Posterior vena cava (tissue), 2 donors: ENCODE measurements at regions of chr9 and their contacts with region 1.

Region 1: DNA sequence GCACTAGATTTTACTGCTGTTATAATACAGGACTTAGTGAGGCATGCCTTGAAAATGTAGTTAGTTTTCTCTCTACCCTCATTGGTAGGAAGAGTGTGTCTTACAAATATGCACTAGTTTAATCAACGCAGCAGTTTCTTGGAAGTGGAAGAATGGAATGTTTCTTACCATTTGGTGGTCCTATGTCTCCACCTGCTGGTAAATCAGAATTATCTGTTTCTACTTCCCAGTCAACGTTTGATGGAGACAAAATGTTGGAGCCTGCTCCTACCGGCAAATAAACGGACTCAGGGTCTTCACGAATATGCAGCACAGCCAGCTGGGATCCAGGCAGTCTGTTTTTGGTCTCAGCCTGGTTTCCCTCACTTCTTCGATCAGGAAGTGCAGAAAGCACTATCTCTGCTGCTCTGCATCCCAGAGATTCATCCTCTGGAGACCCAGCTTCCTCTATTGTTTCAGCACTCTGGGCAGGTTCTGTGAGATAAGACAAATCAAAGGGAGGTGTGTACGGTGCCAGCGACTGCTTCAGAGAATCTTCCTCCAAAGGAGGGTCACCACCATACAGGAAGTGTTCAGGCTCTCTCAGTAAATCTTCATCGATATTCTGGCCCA is 59.5 kb upstream of the PCA3 start:
- DNase-seq: no peak

Region 2: DNA sequence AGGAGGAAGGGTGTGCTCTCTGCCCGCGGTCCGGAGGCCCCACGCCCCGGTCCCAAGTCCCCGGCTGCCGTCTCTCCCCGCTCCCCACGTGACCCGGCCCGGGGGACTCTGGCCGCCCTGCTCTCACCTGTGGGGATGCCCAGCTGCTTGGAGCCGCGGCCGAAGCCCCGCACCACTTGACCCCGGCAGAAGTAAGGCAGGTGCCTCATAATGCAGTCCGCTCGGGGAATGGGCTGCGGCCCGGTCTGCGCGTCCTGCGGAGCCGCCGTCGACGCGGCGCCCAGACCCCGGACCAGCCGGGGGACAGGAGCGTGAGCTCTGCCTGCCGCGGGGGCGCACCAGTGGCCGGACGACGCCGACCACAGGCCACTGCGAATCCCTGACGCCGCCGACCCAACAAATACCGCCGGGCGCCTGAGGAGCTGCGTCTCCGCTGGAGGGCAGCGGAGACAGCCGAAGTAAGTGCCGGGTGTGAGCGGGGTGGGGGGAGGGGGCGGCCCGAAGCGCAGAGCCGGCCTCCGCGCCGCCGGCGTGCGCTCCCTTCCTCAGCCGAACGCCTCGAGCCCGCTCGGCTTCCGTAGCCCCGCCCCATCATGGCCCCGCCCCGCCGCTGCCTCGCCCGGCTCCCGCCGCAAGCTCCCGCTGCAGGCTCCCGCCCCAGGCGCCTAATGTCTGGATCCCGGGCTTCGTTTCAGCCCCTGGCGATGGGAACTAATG is 310.6 kb before region 1 on chr9 and contains the start of gene RFK:
- intact Hi-C with region 1: no loop called
- DNase-seq: peak; percentile 98
- total RNA-seq, gene RFK: 18.3 to 22.1 TPM

Region 3: GRCh38 chr9:76441551-76442322 is 263.0 kb before region 1 on chr9:
- intact Hi-C with region 1: loop called in 1 of 2 experiments (anchors 10 kb)
- DNase-seq: no peak

Region 4: GRCh38 chr9:76458903-76459690 is 245.6 kb before region 1 on chr9 and contains the start of gene GCNT1:
- intact Hi-C with region 1: loop called in 1 of 2 experiments (anchors 10 kb)
- DNase-seq: peak; percentile 94
- total RNA-seq, gene GCNT1: 8.9 to 11.0 TPM

Region 5: GRCh38 chr9:76667521-76667957 is 37.2 kb before region 1 on chr9:
- intact Hi-C with region 1: loop called in 1 of 2 experiments (anchors 5 kb)
- DNase-seq: no peak

Region 6: DNA sequence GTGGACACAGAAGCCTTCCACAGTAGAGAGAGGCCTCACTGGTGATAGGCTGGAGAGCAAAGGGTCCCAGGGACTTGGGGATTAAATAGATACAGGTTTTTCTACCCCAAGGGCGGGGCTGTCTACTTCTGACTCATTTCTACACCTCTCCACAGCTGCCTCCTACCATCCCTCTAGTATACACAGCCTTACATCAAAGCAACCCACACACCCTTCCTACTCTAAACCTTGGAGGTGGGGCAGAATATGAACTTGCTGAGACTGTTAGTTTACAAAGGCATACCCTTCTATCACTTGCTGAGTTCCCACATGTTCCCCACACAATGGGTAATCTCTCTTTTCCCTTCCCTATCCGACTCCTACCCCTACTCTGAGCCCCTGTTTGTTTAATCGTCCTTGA is 39.6 kb after region 1 on chr9:
- intact Hi-C with region 1: no loop called
- DNase-seq: no peak